Activated naive CD8-positive, alpha-beta T cell treated with anti-CD3 and anti-CD28 coated beads, Interleukin-2, amount 10 ng/mL, durations not matched to agents 7 days and 5 days (primary cell): ENCODE measurements at regions of chr7 and their contacts with region 1.

Region 1: GRCh38 chr7:99408379-99409191 is at the starts of genes BUD31 and PDAP1:
- DNase-seq: peak; percentile 93
- ATAC-seq: peak; percentile 82
- H3K4me3 Mint-ChIP-seq: peak within 1 kb of the TSS; percentile 92
- H3K27ac Mint-ChIP-seq: peak within 1 kb of the TSS; percentile 89
- H3K4me1 Mint-ChIP-seq: peaks cover 32% of the 10 kb centered on the region
- H3K27me3 Mint-ChIP-seq: no peaks in the 10 kb centered on the region
- total RNA-seq, gene BUD31: 80.8 to 90.4 TPM
- total RNA-seq, gene PDAP1: 87.1 to 93.5 TPM

Region 2: GRCh38 chr7:99255463-99255862 is 153.1 kb before region 1 on chr7:
- POLR2A ChIA-PET with region 1: no interaction called
- DNase-seq: no peak
- ATAC-seq: no peak
- H3K4me3 Mint-ChIP-seq: no peak overlapping the region
- H3K27ac Mint-ChIP-seq: no peak overlapping the region
- H3K4me1 Mint-ChIP-seq: no peaks in the 10 kb centered on the region
- H3K27me3 Mint-ChIP-seq: peaks cover 8% of the 10 kb centered on the region

Region 3: DNA sequence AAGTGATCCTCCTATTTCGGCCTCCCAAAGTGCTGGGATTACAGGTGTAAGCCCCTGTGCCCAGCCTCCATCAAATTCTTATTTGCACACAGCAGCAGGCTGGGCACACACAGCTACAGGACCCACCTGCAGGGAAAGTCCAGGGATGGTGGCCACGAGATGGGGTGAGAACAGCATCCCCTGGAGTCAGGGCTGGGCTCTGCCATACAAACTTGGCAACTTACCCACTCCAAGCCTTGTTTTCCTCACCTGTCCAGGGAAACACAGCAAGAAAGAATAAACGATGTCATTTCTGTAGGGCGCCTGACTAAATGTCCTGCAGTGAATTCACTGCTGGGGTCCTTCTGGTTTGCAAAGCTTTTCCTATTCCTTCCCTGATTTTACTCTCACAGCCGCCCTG is 130.4 kb before region 1 on chr7:
- POLR2A ChIA-PET with region 1: no interaction called
- DNase-seq: no peak
- ATAC-seq: no peak
- H3K4me3 Mint-ChIP-seq: no peak overlapping the region
- H3K27ac Mint-ChIP-seq: no peak overlapping the region
- H3K4me1 Mint-ChIP-seq: peaks cover 13% of the 10 kb centered on the region
- H3K27me3 Mint-ChIP-seq: no peaks in the 10 kb centered on the region

Region 4: DNA sequence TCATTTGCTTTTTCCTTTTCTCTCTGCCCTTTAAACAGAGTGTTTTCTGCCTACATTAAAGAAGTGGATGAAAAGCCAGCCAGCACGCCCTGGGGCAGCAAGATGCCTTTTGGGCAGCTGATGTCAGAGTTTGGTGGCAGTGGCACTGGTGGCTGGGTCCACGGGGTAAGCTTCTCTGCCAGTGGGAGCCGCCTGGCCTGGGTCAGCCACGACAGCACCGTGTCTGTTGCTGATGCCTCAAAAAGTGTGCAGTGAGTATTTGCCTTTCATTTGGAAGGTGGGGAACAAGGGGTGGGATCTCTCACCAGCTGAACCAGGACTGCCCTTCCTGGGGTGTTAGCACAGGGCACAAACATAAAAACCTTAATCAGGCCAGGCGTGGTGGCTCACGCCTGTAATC is 54.7 kb before region 1 on chr7:
- POLR2A ChIA-PET with region 1: no interaction called
- DNase-seq: no peak
- ATAC-seq: no peak
- H3K4me3 Mint-ChIP-seq: no peak overlapping the region
- H3K27ac Mint-ChIP-seq: no peak overlapping the region
- H3K4me1 Mint-ChIP-seq: peaks cover 1% of the 10 kb centered on the region
- H3K27me3 Mint-ChIP-seq: no peaks in the 10 kb centered on the region

Region 5: GRCh38 chr7:99374103-99375064 is 34.2 kb before region 1 on chr7 and contains the start of gene ARPC1B:
- POLR2A ChIA-PET with region 1: interaction called, 35 read pairs
- DNase-seq: peak; percentile 84
- ATAC-seq: peak; percentile 56
- H3K4me3 Mint-ChIP-seq: peak within 1 kb of the TSS; percentile 87
- H3K27ac Mint-ChIP-seq: peak within 1 kb of the TSS; percentile 78
- H3K4me1 Mint-ChIP-seq: peaks cover 33% of the 10 kb centered on the region
- H3K27me3 Mint-ChIP-seq: peaks cover 2% of the 10 kb centered on the region
- total RNA-seq, gene ARPC1B: 318 to 319 TPM

Region 6: GRCh38 chr7:99392677-99393354 is 15.8 kb before region 1 on chr7:
- POLR2A ChIA-PET with region 1: interaction called, 67 read pairs
- DNase-seq: peak; percentile 84
- ATAC-seq: peak; percentile 90
- H3K4me3 Mint-ChIP-seq: peak overlapping the region; percentile 69
- H3K27ac Mint-ChIP-seq: peak overlapping the region; percentile 82
- H3K4me1 Mint-ChIP-seq: peaks cover 13% of the 10 kb centered on the region
- H3K27me3 Mint-ChIP-seq: no peaks in the 10 kb centered on the region

Region 7: GRCh38 chr7:99438573-99439480 is 30.2 kb after region 1 on chr7 and contains the starts of genes CPSF4 and PTCD1:
- POLR2A ChIA-PET with region 1: interaction called, 11 read pairs
- DNase-seq: peak; percentile 92
- ATAC-seq: peak; percentile 91
- H3K4me3 Mint-ChIP-seq: peak within 1 kb of the TSS; percentile 100
- H3K27ac Mint-ChIP-seq: peak within 1 kb of the TSS; percentile 98
- H3K4me1 Mint-ChIP-seq: peaks cover 27% of the 10 kb centered on the region
- H3K27me3 Mint-ChIP-seq: no peaks in the 10 kb centered on the region
- total RNA-seq, gene CPSF4: 61.5 to 62.1 TPM
- total RNA-seq, gene PTCD1: 10.7 to 11.1 TPM

Region 8: DNA sequence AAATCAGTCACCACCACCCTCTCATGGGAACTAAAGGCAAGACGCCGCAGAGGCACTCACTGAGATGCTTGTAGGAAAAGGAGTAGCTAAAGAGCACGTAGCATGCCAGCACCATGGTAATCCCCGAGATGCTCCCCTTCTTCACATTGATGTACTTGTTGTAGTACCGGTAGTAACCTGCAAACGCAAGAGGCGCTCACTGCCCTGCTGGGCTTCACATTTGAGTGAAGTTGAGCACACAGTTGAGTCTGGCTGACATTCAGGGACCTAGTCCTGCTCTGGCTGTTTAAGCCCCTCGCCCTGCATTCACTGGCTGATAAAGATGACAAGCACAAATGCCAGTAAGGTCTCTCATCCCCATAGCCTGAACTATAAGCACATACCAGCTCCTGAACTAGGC is 50.5 kb after region 1 on chr7:
- POLR2A ChIA-PET with region 1: no interaction called
- DNase-seq: no peak
- ATAC-seq: peak; percentile 62
- H3K4me3 Mint-ChIP-seq: no peak overlapping the region
- H3K27ac Mint-ChIP-seq: no peak overlapping the region
- H3K4me1 Mint-ChIP-seq: peaks cover 15% of the 10 kb centered on the region
- H3K27me3 Mint-ChIP-seq: no peaks in the 10 kb centered on the region

Region 9: GRCh38 chr7:99504603-99505323 is 96.2 kb after region 1 on chr7 and contains the start of gene ZKSCAN5:
- POLR2A ChIA-PET with region 1: interaction called, 18 read pairs
- DNase-seq: peak; percentile 96
- ATAC-seq: peak; percentile 78
- H3K4me3 Mint-ChIP-seq: peak within 1 kb of the TSS; percentile 99
- H3K27ac Mint-ChIP-seq: peak within 1 kb of the TSS; percentile 99
- H3K4me1 Mint-ChIP-seq: peaks cover 21% of the 10 kb centered on the region
- H3K27me3 Mint-ChIP-seq: no peaks in the 10 kb centered on the region
- total RNA-seq, gene ZKSCAN5: 12.7 to 13.5 TPM